Heart right ventricle (tissue), 16 donors: ENCODE measurements at regions of chr10 and their contacts with region 1.

Region 1: DNA sequence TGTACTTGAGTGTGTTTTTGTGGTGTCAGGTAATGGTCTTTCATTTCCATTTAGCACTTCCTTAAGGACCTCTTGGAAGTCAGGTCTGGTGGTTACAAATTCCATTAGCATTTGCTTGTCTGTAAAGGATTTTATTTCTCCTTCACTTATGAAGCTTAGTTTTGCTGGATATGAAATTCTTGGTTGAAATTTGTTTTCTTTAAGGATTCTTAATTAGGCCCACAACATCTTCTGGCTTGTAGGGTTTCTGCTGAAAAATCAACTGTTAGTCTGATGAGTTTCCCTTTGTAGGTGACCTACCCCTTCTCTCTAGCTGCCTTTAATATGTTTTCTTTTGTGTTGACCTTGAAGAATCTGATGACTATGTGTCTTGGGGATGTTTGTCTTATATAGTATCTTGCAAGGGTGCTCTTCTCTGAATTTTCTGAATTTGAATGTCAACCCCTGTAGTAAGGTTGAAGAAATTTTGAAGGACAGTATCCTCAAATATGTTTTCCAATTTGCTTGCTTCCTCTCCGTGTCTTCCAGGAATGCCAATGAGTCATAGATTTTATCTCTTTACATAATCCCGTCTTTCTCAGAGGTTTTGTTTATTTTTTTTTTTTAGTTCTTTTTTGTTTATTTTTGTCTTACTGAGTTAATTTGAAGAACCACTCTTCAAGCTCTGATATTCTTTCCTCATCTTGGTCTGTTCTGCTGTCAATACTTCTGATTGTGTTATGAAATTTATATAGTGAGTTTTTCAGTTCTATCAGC is 70.2 kb downstream of the SLC39A12 start:
- DNase-seq: no peak
- ATAC-seq: no peak
- H3K4me3 ChIP-seq: no peak overlapping the region
- H3K27ac ChIP-seq: no peak overlapping the region
- H3K4me1 ChIP-seq: no peaks in the 10 kb centered on the region
- H3K27me3 ChIP-seq: no peaks in the 10 kb centered on the region
- CTCF ChIP-seq: no peak

Region 2: DNA sequence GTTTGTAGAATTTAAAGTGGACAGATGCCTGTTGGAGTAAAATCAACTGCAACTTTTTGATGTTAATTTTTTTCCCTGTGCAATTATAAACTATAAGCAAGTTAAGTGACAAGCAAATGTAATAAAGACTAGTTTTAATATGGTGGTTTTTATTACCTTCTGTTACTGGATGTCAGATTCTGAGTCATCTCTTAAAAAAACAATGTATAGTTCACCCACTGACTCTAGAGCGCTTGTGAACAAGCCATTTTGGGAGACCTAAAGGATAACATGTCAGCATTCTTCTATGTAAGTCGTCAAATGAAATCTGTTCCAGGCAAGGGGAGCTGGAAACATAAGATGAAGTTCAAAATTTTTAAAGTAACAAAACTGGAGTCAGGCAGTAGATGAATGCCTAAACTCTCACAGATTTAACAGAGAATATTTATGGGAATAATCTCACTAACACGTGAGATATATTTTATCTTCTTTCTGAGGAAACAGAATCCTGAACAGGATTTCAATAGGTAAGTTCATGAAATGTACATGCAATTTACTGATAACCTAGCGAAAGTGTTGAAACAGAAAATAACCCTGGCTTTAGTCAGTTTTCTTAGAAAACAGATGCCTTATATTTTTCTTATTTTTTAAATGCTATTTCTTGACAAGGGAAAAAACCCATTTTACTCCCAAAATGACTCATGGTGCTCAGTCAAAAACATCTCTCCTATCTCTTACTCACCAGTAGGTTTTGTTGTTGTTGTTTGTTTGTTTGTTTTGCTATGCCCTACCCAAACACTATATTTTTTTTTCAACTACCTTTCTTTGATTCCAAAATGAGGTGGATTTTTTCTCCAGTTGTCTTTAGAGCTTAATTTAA is 21.5 kb after region 1 on chr10:
- intact Hi-C with region 1: loop called in 1 of 10 experiments (anchors 2 kb)
- DNase-seq: no peak
- ATAC-seq: no peak
- H3K4me3 ChIP-seq: no peak overlapping the region
- H3K27ac ChIP-seq: no peak overlapping the region
- H3K4me1 ChIP-seq: no peaks in the 10 kb centered on the region
- H3K27me3 ChIP-seq: no peaks in the 10 kb centered on the region
- CTCF ChIP-seq: no peak